ENCODE measurements at regions of chr7 and their contacts with region 1.

Region 1: GRCh38 chr7:42690794-42691639 is 220.9 kb downstream of the C7orf25 start:
- DNase-seq: peak; percentile 12
- H3K4me3 ChIP-seq: no peak overlapping the region
- H3K27ac ChIP-seq: peak overlapping the region; percentile 1 to 46 (median 27)
- H3K4me1 ChIP-seq: peaks cover 0 to 24% (median 10%) of the 10 kb centered on the region in 4 donors
- H3K27me3 ChIP-seq: no peaks in the 10 kb centered on the region
- CTCF ChIP-seq: peak; percentile 24 to 47 (median 44)
- EP300 ChIP-seq: no peak
- POLR2A ChIP-seq: no peak

Region 2: DNA sequence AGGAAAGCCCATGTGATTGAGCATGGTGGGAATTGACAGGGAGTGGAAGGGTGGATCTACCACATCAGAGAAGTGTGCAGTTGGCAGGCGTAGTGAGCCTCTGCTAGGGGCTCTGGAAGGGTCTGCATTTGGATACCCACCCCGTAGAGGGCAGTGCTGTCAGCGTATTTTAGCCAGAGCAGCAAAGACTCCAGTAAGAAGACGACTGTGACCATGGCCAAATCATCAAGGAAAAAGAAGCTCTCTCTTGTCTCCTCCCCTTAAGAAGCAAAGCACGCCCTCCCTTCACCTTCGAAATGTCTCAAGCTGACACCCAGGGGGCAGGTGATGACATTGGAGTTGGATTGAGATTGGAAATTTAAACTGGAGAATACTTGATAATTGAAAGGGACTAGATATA is 919.3 kb before region 1 on chr7:
- in situ Hi-C with region 1: no loop called
- intact Hi-C with region 1: no loop called
- DNase-seq: no peak
- H3K4me3 ChIP-seq: no peak overlapping the region
- H3K27ac ChIP-seq: no peak overlapping the region
- H3K4me1 ChIP-seq: no peaks in the 10 kb centered on the region
- H3K27me3 ChIP-seq: no peaks in the 10 kb centered on the region
- CTCF ChIP-seq: no peak
- EP300 ChIP-seq: no peak
- POLR2A ChIP-seq: no peak

Region 3: DNA sequence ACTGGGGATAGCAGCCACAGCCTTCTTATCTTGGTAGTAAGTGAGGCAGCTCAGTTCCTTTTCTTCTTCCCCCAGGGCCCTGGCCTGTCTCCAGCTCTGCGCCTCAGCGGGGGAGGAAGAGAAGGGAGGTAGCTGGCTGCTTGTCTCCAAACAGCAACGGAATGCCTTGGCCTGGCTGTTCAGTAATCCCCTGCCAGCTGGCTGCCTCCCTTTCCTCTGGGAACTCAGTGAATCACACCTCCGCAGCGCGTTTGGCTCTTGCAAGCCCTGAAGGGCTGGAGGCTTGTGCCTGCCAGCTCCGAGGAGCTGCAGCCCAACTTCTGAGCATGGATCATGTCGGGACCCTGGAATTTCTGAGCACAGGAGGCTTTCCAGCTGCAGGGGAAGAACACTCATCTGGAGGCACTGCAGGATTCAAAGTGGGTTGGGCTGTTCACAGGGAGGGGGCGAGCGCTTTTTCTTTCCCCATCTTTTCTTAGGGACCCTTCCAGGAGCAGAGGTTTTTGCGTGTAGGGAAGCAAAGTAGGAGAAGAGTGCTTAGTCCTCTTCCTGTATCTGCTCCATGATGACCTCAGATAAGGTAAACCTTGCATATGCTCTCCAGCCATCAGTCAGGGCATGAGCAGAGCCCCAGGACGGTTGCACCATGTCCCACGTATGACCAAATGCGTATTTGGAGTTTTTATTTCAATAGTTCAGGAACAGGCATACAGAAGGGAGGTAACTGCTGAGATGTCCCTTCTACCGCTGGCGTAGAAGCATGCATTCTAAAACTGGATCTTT is 734.9 kb before region 1 on chr7:
- in situ Hi-C with region 1: loop called in 1 of 4 experiments (anchors 25 kb)
- intact Hi-C with region 1: no loop called
- DNase-seq: peak; percentile 83
- H3K4me3 ChIP-seq: no peak overlapping the region
- H3K27ac ChIP-seq: peak overlapping the region; percentile 50 to 75 (median 68)
- H3K4me1 ChIP-seq: peaks cover 5 to 24% (median 17%) of the 10 kb centered on the region in 4 donors
- H3K27me3 ChIP-seq: no peaks in the 10 kb centered on the region
- CTCF ChIP-seq: no peak
- EP300 ChIP-seq: no peak
- POLR2A ChIP-seq: no peak

Region 4: DNA sequence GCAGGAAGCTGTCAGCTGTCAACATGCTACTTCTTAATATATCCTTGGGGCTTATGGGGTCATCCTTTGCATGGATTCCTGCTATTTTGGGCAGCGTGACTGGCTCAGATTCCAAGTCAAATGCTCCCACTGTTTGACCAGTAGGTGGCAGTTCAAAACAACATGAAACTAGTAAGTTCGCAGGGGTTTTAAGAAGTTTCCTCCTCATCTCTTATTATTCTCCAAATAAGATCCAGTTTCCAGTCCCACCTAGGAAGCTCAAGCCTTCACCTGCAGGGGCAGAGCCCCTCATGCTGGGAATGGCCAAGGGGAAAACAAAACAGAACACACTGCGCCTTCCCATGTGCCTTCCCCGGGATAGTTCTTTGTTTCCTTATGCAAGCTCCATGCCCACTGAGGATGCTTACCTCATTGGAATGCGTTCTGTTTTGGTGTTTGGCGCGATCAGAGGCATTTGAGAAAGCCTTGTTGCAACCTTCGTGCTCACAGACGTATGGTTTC is 713.8 kb before region 1 on chr7:
- in situ Hi-C with region 1: loop called in 2 of 4 experiments (anchors 25 kb)
- intact Hi-C with region 1: no loop called
- DNase-seq: no peak
- H3K4me3 ChIP-seq: no peak overlapping the region
- H3K27ac ChIP-seq: peak overlapping the region in 2 of 4 donors; percentile 11 to 20
- H3K4me1 ChIP-seq: peaks cover 0 to 28% (median 8%) of the 10 kb centered on the region in 4 donors
- H3K27me3 ChIP-seq: no peaks in the 10 kb centered on the region
- CTCF ChIP-seq: peak; percentile 53 to 66 (median 54)
- EP300 ChIP-seq: no peak
- POLR2A ChIP-seq: no peak